ENCODE measurements at regions of chr16 and their contacts with region 1.

Region 1: DNA sequence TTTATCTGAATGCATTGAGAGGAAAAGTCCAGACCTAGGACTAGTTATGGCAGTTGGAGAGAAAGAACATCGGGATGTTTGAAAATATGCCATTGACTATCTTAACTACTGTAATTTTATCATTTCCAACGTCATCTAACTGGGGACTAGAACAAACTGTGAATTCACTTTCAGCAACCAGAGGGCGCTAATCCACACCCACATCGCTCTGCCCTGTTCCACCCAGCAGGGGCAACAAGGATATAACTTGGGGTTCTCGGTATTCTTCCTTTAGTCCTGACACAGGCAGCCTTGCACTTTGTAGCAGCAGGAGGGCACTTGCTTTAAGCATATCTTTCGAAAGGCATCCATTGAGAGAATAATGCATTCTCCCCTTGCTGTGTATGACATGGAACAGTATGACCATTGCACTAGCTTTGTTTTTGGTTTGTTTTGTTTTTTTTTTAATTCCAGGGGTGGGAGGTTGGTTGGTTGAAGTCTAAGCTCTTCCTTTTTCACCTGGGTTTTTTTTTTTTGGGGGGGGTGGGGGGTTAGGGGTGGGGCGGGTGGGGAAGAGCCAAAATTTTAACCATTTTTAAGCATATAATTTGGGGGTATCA is 31.5 kb downstream of the SIAH1 start:
- DNase-seq: no peak

Region 2: GRCh38 chr16:48231727-48232492 is 121.8 kb before region 1 on chr16:
- intact Hi-C with region 1: no loop called
- DNase-seq: no peak

Region 3: GRCh38 chr16:48284772-48285409 is 68.8 kb before region 1 on chr16:
- intact Hi-C with region 1: no loop called
- DNase-seq: no peak

Region 4: DNA sequence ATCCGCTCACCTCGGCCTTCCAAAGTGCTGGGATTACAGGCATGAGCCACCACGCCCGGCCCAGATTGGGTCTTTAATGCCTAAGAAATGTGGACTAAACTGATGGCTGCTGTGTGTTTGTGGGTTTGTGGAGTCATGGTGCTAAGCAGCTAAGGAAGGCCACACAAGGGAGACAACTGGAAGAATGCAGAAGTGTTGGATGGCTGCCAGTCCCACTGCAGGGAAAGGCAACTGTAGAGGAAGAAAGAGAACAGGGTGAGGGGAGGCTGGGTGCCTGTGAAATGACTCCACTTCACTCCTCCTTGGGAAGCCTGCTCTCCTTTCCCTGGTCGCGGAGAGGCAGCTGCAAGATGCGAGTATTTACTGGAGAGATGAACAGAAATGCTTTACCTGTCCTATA is 55.0 kb after region 1 on chr16:
- intact Hi-C with region 1: no loop called
- DNase-seq: no peak

Region 5: DNA sequence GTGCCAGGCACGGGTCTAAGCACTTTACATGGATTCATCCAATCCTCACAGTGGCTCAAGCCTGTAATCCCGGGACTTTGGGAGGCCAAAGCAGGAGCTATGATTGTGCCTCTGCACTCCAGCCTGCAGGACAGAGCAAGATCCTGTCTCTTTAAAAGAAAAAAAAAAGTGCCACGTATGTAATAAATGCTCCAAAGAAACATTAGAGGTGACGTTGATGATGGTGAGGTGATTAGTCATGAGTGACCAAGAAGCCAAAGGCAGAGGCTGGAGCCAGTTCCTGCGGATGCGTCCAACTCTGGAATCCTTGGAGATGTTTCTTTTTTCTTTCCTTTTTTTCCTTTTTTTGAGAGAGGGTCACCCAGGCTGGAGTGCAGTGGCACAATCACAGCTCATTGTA is 90.9 kb after region 1 on chr16:
- intact Hi-C with region 1: no loop called
- DNase-seq: no peak

Region 6: DNA sequence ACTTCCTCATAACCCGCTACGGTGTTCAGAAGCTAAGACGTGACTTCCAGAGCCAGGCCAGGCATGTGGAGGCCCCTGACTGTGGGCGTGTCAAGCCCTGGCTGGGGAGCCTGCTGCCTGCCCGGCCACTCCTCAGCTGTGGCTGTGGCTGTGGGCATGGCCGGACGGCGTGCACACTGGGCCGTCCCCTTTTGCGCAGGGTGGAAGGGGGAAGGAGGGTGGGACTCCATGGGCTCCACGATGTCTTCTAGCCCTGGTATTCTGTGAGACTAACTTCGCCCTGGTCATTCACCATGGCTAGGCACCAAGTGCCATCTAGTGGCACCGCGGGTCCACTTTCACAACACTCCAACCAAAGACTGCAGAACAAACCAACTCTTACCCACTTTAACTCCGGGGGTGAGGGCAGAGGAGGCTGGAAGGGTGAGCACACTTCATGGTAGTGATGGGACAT is 188.4 kb after region 1 on chr16:
- intact Hi-C with region 1: loop called (anchors 1 kb)
- DNase-seq: no peak

Region 7: GRCh38 chr16:48623304-48624016 is 269.8 kb after region 1 on chr16:
- intact Hi-C with region 1: loop called (anchors 2 kb)
- DNase-seq: peak; percentile 95

Measured in cardiac septum (tissue), 1 donor.